Naive thymus-derived CD4-positive, alpha-beta T cell (primary cell): ENCODE measurements at regions of chr22 and their contacts with region 1.

Region 1: GRCh38 chr22:50185384-50186087 is at the start of gene TRABD:
- DNase-seq: peak; percentile 76 to 89 (median 86)
- ATAC-seq: peak; percentile 87
- H3K4me3 ChIP-seq: peak within 1 kb of the TSS; percentile 83
- H3K4me3 Mint-ChIP-seq: peak within 1 kb of the TSS; percentile 88 to 98 (median 94)
- H3K27ac ChIP-seq: peak within 1 kb of the TSS; percentile 78
- H3K27ac Mint-ChIP-seq: peak within 1 kb of the TSS; percentile 82 to 98 (median 96)
- H3K4me1 ChIP-seq: peaks cover 28 to 32% of the 10 kb centered on the region in 2 donors
- H3K4me1 Mint-ChIP-seq: peaks cover 10 to 37% (median 23%) of the 10 kb centered on the region in 7 donors
- H3K27me3 ChIP-seq: no peaks in the 10 kb centered on the region
- H3K27me3 Mint-ChIP-seq: peaks cover 0 to 6% (median 0%) of the 10 kb centered on the region in 5 donors
- total RNA-seq, gene TRABD: 106 to 157 (median 124) TPM

Region 2: GRCh38 chr22:49917974-49918910 is 267.3 kb before region 1 on chr22 and contains the starts of genes ALG12 and CRELD2:
- CTCF ChIA-PET with region 1: no interaction called
- POLR2A ChIA-PET with region 1: no interaction called
- intact Hi-C with region 1: loop called in 1 of 2 experiments (anchors 5 kb)
- DNase-seq: peak; percentile 92 to 98 (median 95)
- ATAC-seq: peak; percentile 99
- H3K4me3 ChIP-seq: peak within 1 kb of the TSS; percentile 96
- H3K4me3 Mint-ChIP-seq: peak within 1 kb of the TSS; percentile 84 to 97 (median 88)
- H3K27ac ChIP-seq: peak within 1 kb of the TSS; percentile 97
- H3K27ac Mint-ChIP-seq: peak within 1 kb of the TSS; percentile 73 to 95 (median 91)
- H3K4me1 ChIP-seq: peaks cover 11 to 20% of the 10 kb centered on the region in 2 donors
- H3K4me1 Mint-ChIP-seq: peaks cover 0 to 36% (median 26%) of the 10 kb centered on the region in 7 donors
- H3K27me3 ChIP-seq: no peaks in the 10 kb centered on the region
- H3K27me3 Mint-ChIP-seq: no peaks in the 10 kb centered on the region
- total RNA-seq, gene ALG12: 16.2 to 22.4 (median 19.5) TPM
- total RNA-seq, gene CRELD2: 19.7 to 80.9 (median 28.5) TPM

Region 3: DNA sequence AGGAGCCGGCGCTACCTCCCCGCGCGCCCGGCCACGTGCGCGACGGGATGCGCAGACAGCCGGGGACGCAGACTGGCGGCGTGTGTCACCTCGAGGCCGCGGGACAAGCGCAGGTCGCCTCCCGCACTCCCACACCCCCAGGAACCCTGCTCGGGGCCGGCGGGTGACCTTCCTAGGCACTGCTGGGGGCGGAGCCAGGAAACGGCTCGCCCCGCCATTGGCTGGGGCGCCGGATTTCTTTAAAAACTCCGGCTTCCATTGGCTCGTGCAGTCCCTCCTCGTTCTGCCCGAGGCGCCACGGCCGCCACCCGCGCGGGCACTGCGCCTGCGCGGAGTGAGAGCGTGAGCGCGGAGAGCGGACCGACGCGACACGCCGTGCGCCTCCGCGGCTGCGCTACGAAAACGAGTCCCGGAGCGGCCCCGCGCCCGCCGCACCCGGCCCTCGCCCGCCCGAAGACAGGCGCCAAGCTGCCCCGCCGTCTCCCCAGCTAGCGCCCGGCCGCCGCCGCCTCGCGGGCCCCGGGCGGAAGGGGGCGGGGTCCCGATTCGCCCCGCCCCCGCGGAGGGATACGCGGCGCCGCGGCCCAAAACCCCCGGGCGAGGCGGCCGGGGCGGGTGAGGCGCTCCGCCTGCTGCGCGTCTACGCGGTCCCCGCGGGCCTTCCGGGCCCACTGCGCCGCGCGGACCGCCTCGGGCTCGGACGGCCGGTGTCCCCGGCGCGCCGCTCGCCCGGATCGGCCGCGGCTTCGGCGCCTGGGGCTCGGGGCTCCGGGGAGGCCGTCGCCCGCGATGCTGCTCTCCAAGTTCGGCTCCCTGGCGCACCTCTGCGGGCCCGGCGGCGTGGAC is 225.2 kb before region 1 on chr22 and contains the start of gene PIM3:
- CTCF ChIA-PET with region 1: no interaction called
- POLR2A ChIA-PET with region 1: no interaction called
- intact Hi-C with region 1: loop called in 1 of 2 experiments (anchors 10 kb)
- DNase-seq: peak; percentile 90 to 95 (median 94)
- ATAC-seq: peak; percentile 80
- H3K4me3 ChIP-seq: peak within 1 kb of the TSS; percentile 86
- H3K4me3 Mint-ChIP-seq: peak within 1 kb of the TSS; percentile 82 to 95 (median 90)
- H3K27ac ChIP-seq: peak within 1 kb of the TSS; percentile 90
- H3K27ac Mint-ChIP-seq: peak within 1 kb of the TSS; percentile 76 to 96 (median 89)
- H3K4me1 ChIP-seq: peaks cover 20 to 26% of the 10 kb centered on the region in 2 donors
- H3K4me1 Mint-ChIP-seq: peaks cover 7 to 30% (median 15%) of the 10 kb centered on the region in 7 donors
- H3K27me3 ChIP-seq: no peaks in the 10 kb centered on the region
- H3K27me3 Mint-ChIP-seq: no peaks in the 10 kb centered on the region
- total RNA-seq, gene PIM3: 44.4 to 164 (median 78.3) TPM

Region 4: GRCh38 chr22:50169774-50170341 is 15.7 kb before region 1 on chr22:
- CTCF ChIA-PET with region 1: no interaction called
- POLR2A ChIA-PET with region 1: interaction called, 3 read pairs
- intact Hi-C with region 1: loop called (anchors 1 to 2 kb)
- DNase-seq: peak in 2 of 9 donors; percentile 18 to 69
- ATAC-seq: peak; percentile 68
- H3K4me3 ChIP-seq: no peak overlapping the region
- H3K4me3 Mint-ChIP-seq: peak overlapping the region in 6 of 10 donors; percentile 39 to 63 (median 47)
- H3K27ac ChIP-seq: no peak overlapping the region
- H3K27ac Mint-ChIP-seq: no peak overlapping the region
- H3K4me1 ChIP-seq: no peaks in the 10 kb centered on the region
- H3K4me1 Mint-ChIP-seq: peaks cover 0 to 6% (median 2%) of the 10 kb centered on the region in 7 donors
- H3K27me3 ChIP-seq: peaks cover 0 to 4% of the 10 kb centered on the region in 2 donors
- H3K27me3 Mint-ChIP-seq: peaks cover 20 to 48% (median 39%) of the 10 kb centered on the region in 5 donors

Region 5: GRCh38 chr22:50209893-50210292 is 24.4 kb after region 1 on chr22:
- CTCF ChIA-PET with region 1: interaction called, 4 read pairs
- POLR2A ChIA-PET with region 1: interaction called, 10 read pairs
- intact Hi-C with region 1: loop called in 1 of 2 experiments (anchors 1 kb)
- DNase-seq: peak; percentile 50 to 78 (median 68)
- ATAC-seq: peak; percentile 83
- H3K4me3 ChIP-seq: no peak overlapping the region
- H3K4me3 Mint-ChIP-seq: peak overlapping the region in 1 of 10 donors; percentile 25
- H3K27ac ChIP-seq: no peak overlapping the region
- H3K27ac Mint-ChIP-seq: peak overlapping the region in 8 of 9 donors; percentile 58 to 96 (median 82)
- H3K4me1 ChIP-seq: no peaks in the 10 kb centered on the region
- H3K4me1 Mint-ChIP-seq: peaks cover 12 to 39% (median 32%) of the 10 kb centered on the region in 7 donors
- H3K27me3 ChIP-seq: no peaks in the 10 kb centered on the region
- H3K27me3 Mint-ChIP-seq: no peaks in the 10 kb centered on the region

Region 6: DNA sequence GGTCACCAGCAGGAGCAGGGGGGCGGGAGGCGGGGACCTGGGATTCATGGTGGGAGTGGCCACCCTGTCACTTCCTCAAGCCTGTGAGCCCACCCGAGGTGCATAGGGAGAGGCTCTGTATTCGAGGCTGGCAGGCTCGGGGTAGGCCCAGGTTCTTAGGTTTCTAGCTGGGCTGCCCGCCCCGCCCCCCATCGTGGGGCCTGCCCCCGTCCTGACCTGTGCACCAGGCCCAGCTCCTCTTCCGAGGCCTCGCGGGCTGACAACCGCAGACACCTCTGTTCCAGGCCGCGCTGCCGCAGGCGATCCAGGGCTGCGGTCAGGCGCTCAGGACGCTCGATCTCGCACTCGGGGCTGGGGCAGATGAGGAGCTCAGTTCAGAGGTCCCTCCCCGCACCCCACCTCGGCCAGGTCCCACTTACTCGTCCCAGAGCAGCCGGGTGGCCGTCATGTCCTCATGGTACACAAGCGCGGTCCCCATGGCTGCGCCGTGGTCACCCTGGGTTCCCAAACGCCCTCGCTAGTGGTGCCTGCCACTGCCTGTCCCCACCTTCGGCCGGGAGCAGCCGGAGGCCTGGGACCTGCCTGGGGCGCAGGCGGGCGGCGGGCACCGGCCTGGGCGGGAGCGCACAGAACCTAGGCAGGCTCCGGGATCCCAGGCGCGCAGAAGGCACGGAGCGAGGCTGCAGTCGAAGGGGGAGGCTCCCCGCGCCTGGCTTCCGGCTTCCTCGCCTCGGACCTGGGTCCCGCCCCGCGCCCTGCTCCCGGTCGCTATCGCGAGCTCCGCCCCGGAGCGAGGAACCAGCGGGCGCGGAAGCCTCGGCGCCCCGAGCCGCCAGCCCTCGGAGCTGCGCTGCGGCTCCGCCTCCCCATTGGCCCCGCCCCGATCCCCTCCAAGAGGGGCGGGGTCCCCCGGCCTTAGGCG is 65.3 kb after region 1 on chr22 and contains the start of gene HDAC10:
- CTCF ChIA-PET with region 1: no interaction called
- POLR2A ChIA-PET with region 1: interaction called, 10 read pairs
- intact Hi-C with region 1: no loop called
- DNase-seq: peak; percentile 60 to 86 (median 71)
- ATAC-seq: peak; percentile 78
- H3K4me3 ChIP-seq: peak within 1 kb of the TSS; percentile 71
- H3K4me3 Mint-ChIP-seq: peak within 1 kb of the TSS; percentile 61 to 88 (median 80)
- H3K27ac ChIP-seq: peak within 1 kb of the TSS; percentile 71
- H3K27ac Mint-ChIP-seq: peak within 1 kb of the TSS in 7 of 9 donors; percentile 31 to 80 (median 65)
- H3K4me1 ChIP-seq: peaks cover 25 to 38% of the 10 kb centered on the region in 2 donors
- H3K4me1 Mint-ChIP-seq: peaks cover 4 to 26% (median 17%) of the 10 kb centered on the region in 7 donors
- H3K27me3 ChIP-seq: no peaks in the 10 kb centered on the region
- H3K27me3 Mint-ChIP-seq: no peaks in the 10 kb centered on the region
- total RNA-seq, gene HDAC10: 95.9 to 139 (median 105) TPM

Region 7: GRCh38 chr22:50348058-50348457 is 162.5 kb after region 1 on chr22:
- CTCF ChIA-PET with region 1: no interaction called
- POLR2A ChIA-PET with region 1: no interaction called
- intact Hi-C with region 1: no loop called
- DNase-seq: no peak
- ATAC-seq: no peak
- H3K4me3 ChIP-seq: no peak overlapping the region
- H3K4me3 Mint-ChIP-seq: no peak overlapping the region
- H3K27ac ChIP-seq: no peak overlapping the region
- H3K27ac Mint-ChIP-seq: no peak overlapping the region
- H3K4me1 ChIP-seq: peaks cover 14 to 22% of the 10 kb centered on the region in 2 donors
- H3K4me1 Mint-ChIP-seq: peaks cover 0 to 6% (median 1%) of the 10 kb centered on the region in 7 donors
- H3K27me3 ChIP-seq: no peaks in the 10 kb centered on the region
- H3K27me3 Mint-ChIP-seq: no peaks in the 10 kb centered on the region

Region 8: DNA sequence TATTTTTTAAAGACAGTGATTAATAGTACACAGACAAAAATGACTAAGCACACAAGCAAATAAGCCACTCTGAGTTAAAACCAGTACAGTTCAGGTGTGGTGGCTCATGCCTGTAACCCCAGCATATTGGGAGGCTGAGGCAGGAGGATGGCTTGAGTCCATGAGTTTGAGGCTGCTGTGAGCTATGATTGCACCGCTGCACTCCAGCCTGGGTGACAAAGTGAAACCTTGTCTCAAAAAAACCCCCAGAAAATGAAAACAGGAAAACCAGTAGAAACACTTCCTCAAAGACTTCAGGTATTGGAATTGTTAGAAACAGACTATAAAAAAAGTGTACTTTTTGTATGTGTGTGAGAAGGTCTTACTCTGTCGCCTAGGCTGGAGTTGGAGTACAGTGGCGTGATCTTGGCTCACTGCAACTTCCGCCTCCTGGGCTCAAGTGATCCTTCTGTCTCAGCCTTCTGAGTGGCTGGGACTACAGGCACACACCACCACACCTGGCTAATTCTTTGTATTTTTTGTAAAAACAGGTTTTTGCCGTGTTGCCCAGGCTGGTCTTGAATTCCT is 190.6 kb after region 1 on chr22:
- CTCF ChIA-PET with region 1: no interaction called
- POLR2A ChIA-PET with region 1: no interaction called
- intact Hi-C with region 1: no loop called
- DNase-seq: no peak
- ATAC-seq: no peak
- H3K4me3 ChIP-seq: no peak overlapping the region
- H3K4me3 Mint-ChIP-seq: peak overlapping the region in 6 of 10 donors; percentile 30 to 56 (median 41)
- H3K27ac ChIP-seq: no peak overlapping the region
- H3K27ac Mint-ChIP-seq: peak overlapping the region in 8 of 9 donors; percentile 7 to 83 (median 68)
- H3K4me1 ChIP-seq: peaks cover 0 to 6% of the 10 kb centered on the region in 2 donors
- H3K4me1 Mint-ChIP-seq: peaks cover 0 to 22% (median 13%) of the 10 kb centered on the region in 7 donors
- H3K27me3 ChIP-seq: no peaks in the 10 kb centered on the region
- H3K27me3 Mint-ChIP-seq: no peaks in the 10 kb centered on the region

Region 9: GRCh38 chr22:50525390-50526068 is 340.0 kb after region 1 on chr22 and contains the start of gene SCO2:
- CTCF ChIA-PET with region 1: no interaction called
- POLR2A ChIA-PET with region 1: no interaction called
- intact Hi-C with region 1: loop called in 1 of 2 experiments (anchors 5 kb)
- DNase-seq: peak; percentile 97 to 99 (median 98)
- ATAC-seq: peak; percentile 77
- H3K4me3 ChIP-seq: peak within 1 kb of the TSS; percentile 77
- H3K4me3 Mint-ChIP-seq: peak within 1 kb of the TSS; percentile 77 to 96 (median 89)
- H3K27ac ChIP-seq: peak within 1 kb of the TSS; percentile 87
- H3K27ac Mint-ChIP-seq: peak within 1 kb of the TSS; percentile 78 to 93 (median 86)
- H3K4me1 ChIP-seq: peaks cover 14 to 21% of the 10 kb centered on the region in 2 donors
- H3K4me1 Mint-ChIP-seq: peaks cover 8 to 33% (median 26%) of the 10 kb centered on the region in 7 donors
- H3K27me3 ChIP-seq: no peaks in the 10 kb centered on the region
- H3K27me3 Mint-ChIP-seq: peaks cover 0 to 6% (median 0%) of the 10 kb centered on the region in 5 donors
- total RNA-seq, gene SCO2: 2.2 to 12.0 (median 5.5) TPM